GM12878 (cell line): ENCODE measurements at regions of chr4 and their contacts with region 1.

Region 1: GRCh38 chr4:53476232-53477037 is 99.0 kb downstream of the FIP1L1 start:
- DNase-seq: no peak
- ATAC-seq: no peak
- H3K4me3 ChIP-seq: no peak overlapping the region
- H3K27ac ChIP-seq: no peak overlapping the region
- H3K4me1 ChIP-seq: no peaks in the 10 kb centered on the region
- H3K27me3 ChIP-seq: no peaks in the 10 kb centered on the region; a peak in 1 of 4 replicates
- CTCF ChIP-seq: no peak
- EP300 ChIP-seq: no peak
- POLR2A ChIP-seq: no peak
- RAD21 ChIP-seq: no peak

Region 2: DNA sequence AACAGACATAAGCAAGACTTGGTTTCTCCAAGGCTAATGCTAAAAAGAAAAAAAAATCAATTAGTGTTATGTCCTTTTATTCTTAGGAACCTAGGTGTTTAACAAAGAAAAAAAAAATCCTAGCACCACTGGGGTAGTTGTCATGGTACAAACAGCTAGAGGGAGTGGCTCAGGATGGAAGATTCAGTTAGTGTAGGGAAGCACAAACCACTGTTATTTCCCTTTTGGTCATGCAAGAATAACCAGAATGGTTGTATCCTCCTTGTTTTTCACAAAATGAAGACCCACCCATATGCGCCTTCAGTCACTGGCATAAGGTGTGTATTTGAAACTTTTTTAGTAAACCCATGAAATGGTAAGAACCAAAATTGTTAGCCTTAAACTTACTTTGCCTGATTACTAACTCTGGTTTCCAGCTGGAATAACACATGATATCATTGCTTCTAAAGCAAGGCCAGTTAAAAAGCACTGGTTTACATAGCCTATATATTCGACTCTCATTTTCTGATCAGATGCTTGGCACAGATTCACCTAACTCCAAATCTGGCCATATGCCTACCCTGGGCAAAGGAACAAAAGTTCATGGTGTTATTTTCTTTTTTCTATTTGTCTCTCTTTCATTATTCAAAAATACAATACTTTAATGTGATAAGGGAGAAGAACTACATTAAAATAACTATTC is 243.2 kb before region 1 on chr4:
- CTCF ChIA-PET with region 1: no interaction called
- POLR2A ChIA-PET with region 1: no interaction called
- RAD21 ChIA-PET with region 1: no interaction called
- SMC1A ChIA-PET with region 1: no interaction called
- in situ Hi-C with region 1: no loop called
- intact Hi-C with region 1: no loop called
- DNase-seq: no peak
- ATAC-seq: no peak
- H3K4me3 ChIP-seq: no peak overlapping the region
- H3K27ac ChIP-seq: no peak overlapping the region
- H3K4me1 ChIP-seq: peaks cover 7% of the 10 kb centered on the region; the same call in 1 of the 2 replicates
- H3K27me3 ChIP-seq: no peaks in the 10 kb centered on the region
- CTCF ChIP-seq: no peak
- EP300 ChIP-seq: no peak
- POLR2A ChIP-seq: no peak
- RAD21 ChIP-seq: no peak

Region 3: DNA sequence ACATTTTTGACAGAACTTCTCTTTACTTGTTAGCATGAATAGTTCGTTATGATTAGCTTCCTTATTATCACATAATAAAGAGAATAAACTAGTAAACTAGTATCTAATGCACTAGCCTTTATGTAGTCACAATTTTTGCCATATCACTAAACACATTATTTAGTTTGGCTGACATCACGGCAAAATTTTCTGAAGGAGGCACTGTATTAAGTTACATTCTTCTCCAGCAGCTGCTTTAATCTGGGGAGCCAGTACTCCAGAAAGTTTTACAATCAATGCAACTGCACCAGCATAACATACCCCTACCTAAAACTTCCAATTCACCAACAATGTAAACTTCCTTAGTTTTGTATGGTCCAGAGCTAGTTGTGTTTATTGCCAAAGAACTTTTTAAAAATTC is 11.2 kb before region 1 on chr4:
- CTCF ChIA-PET with region 1: interaction called, 6 read pairs
- POLR2A ChIA-PET with region 1: no interaction called
- RAD21 ChIA-PET with region 1: no interaction called
- SMC1A ChIA-PET with region 1: interaction called, 10 read pairs
- in situ Hi-C with region 1: no loop called
- intact Hi-C with region 1: no loop called
- DNase-seq: no peak
- ATAC-seq: no peak
- H3K4me3 ChIP-seq: no peak overlapping the region
- H3K27ac ChIP-seq: no peak overlapping the region
- H3K4me1 ChIP-seq: no peaks in the 10 kb centered on the region
- H3K27me3 ChIP-seq: no peaks in the 10 kb centered on the region
- CTCF ChIP-seq: no peak
- EP300 ChIP-seq: no peak
- POLR2A ChIP-seq: no peak
- RAD21 ChIP-seq: no peak

Region 4: GRCh38 chr4:54359919-54360650 is 883.6 kb after region 1 on chr4:
- CTCF ChIA-PET with region 1: no interaction called
- POLR2A ChIA-PET with region 1: no interaction called
- RAD21 ChIA-PET with region 1: no interaction called
- SMC1A ChIA-PET with region 1: no interaction called
- in situ Hi-C with region 1: no loop called
- intact Hi-C with region 1: no loop called
- DNase-seq: no peak
- ATAC-seq: peak; percentile 38; the same call in 1 of the 3 replicates
- H3K4me3 ChIP-seq: no peak overlapping the region
- H3K27ac ChIP-seq: no peak overlapping the region
- H3K4me1 ChIP-seq: no peaks in the 10 kb centered on the region
- H3K27me3 ChIP-seq: no peaks in the 10 kb centered on the region
- CTCF ChIP-seq: no peak
- EP300 ChIP-seq: no peak
- POLR2A ChIP-seq: no peak
- RAD21 ChIP-seq: no peak